Endothelial cell of umbilical vein (primary cell): ENCODE measurements at regions of chr11 and their contacts with region 1.

Region 1: DNA sequence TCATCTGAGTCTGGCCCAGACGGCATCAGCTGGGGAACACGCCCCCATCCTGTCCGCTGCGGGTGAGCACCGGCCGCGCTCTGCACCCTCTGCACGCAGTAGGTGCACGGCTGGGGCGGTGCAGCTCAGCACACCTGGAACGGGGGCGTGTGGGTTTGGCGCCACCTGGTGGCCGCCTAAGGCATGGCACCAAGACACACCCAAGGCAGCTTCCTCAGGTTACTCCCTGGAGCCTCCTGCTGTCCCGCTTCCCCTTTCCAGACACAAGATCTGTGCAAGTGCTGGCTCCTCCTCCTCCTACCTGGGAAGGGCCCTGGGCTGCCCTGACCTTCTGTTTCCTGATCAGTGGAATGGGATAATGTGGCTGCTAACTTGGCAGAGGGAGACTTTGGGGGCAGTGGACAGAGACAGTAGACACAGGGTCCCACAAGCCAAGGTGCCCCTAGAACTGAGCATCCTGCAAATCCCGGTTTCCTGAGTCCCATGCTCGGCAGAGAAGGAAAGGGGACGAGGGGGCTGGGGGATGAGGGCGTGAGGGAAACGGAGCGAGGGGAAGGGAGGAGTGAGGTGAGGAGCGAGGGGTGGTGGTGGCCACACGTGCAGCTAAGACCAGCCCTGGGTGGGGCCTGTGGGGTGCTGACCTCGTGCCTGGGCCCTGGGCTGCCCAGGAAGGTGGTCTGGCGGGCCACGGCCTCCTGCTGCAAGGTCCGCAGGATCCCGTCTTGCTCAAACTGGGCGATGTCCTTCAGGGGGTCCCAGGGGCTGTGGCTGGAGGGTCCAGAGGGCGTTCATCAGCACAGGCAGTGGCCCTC is 34.8 kb upstream of the CARS1 start:
- DNase-seq: peak; percentile 59
- H3K4me3 ChIP-seq: no peak overlapping the region
- H3K27ac ChIP-seq: no peak overlapping the region
- H3K4me1 ChIP-seq: peaks cover 21% of the 10 kb centered on the region
- H3K27me3 ChIP-seq: no peaks in the 10 kb centered on the region
- CTCF ChIP-seq: peak; percentile 98 to 99
- POLR2A ChIP-seq: no peak

Region 2: DNA sequence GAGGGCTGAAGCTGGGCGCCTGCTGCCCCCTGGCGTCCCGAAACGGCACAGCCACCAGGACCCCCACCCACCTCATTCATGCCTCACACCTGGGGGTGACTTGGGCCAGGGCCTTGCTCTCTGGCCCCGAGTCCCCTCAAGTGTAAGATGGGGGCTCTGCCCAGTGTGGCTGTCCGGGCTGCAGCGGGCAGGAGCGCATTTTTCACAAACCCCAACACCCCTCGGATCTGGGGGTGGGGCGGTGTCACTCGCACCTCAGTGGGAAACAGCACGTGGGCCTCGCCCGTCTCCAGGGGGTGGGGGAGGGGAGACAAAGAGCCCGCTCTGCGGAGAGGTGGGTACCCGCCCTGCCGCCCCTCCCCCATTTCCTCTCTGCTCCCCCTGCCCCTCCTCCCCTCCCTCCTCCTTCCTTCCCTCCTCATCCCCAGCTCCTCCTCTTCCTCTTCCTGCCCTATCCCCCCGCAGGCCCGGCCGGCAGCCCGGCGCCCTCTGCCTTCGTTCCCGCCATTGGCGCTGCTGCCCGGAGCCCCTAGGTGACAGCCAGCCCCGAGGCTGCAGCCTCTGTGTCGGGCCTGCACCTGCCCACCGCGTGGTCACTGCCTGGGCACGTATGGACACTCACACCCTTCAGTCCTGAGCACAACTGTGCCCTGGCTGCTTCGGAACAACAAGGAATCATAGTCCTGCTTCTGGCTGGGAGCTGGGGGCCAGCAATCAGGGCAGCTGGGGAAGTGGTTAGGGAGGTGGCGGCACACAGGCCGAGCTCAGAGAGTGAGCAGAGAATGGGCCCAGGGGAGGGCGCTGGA is 199.6 kb before region 1 on chr11:
- CTCF ChIA-PET with region 1: interaction called, 13 read pairs
- POLR2A ChIA-PET with region 1: no interaction called
- dilution Hi-C with region 1: no loop called
- intact Hi-C with region 1: no loop called
- DNase-seq: peak; percentile 64
- H3K4me3 ChIP-seq: peak overlapping the region in 2 of 3 experiments; percentile 29 to 36
- H3K27ac ChIP-seq: peak overlapping the region; percentile 43
- H3K4me1 ChIP-seq: peaks cover 14% of the 10 kb centered on the region
- H3K27me3 ChIP-seq: no peaks in the 10 kb centered on the region
- CTCF ChIP-seq: peak; percentile 95 to 98
- POLR2A ChIP-seq: peak; percentile 79

Region 3: GRCh38 chr11:2992234-2992996 is 99.6 kb before region 1 on chr11 and contains the start of gene NAP1L4:
- CTCF ChIA-PET with region 1: interaction called, 5 read pairs
- POLR2A ChIA-PET with region 1: no interaction called
- dilution Hi-C with region 1: no loop called
- intact Hi-C with region 1: loop called (anchors 1 kb)
- DNase-seq: peak; percentile 97
- H3K4me3 ChIP-seq: peak within 1 kb of the TSS; percentile 64 to 97 (median 95)
- H3K27ac ChIP-seq: peak within 1 kb of the TSS; percentile 64
- H3K4me1 ChIP-seq: peaks cover 33% of the 10 kb centered on the region
- H3K27me3 ChIP-seq: no peaks in the 10 kb centered on the region
- CTCF ChIP-seq: no peak
- POLR2A ChIP-seq: peak; percentile 88
- total RNA-seq, gene NAP1L4: 173 and 177 TPM in 2 replicates

Region 4: DNA sequence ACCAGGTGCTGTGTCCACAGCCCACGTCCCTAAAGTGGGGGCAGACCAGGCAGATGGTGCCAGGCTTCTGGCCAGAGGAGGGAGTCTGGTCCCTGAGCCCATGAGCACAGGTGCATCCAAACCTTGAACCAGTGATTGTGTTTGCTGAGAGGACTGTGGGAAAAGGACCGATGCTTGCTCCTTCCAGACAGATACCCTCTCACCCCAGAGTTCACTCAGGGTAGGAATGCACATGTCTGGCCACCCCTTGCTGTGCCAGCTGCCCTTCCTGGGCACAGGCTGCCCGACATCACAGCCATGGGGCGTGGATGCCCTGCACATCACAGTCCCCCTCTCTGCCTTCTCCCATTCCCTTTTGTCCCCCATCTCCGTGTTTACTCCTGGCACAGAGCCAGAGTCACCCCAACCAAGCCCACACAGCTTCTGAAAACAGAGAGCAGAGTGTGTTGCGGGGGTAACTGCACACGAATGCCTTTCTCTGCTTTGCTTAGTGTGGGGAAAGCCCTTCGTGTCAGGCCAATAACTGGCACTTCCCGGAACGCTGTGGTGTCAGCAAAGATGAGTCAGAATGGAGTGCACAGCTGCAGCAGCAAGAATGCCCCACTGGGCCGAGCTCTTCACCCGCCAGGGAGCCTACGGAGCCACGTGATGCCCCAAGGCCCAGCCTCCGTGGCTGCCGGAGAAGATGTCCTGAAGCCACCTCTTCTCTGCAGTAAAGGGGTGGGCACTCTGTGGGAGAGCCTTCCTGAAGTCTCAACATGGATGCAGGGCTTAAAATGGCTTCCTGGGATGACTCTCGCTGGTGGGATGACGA is 42.4 kb before region 1 on chr11:
- CTCF ChIA-PET with region 1: interaction called, 85 read pairs
- POLR2A ChIA-PET with region 1: interaction called, 4 read pairs
- dilution Hi-C with region 1: no loop called
- intact Hi-C with region 1: loop called (anchors 1 kb)
- DNase-seq: peak; percentile 78
- H3K4me3 ChIP-seq: no peak overlapping the region
- H3K27ac ChIP-seq: peak overlapping the region; percentile 57
- H3K4me1 ChIP-seq: peaks cover 12% of the 10 kb centered on the region
- H3K27me3 ChIP-seq: no peaks in the 10 kb centered on the region
- CTCF ChIP-seq: peak; percentile 27 to 29
- POLR2A ChIP-seq: no peak

Region 5: GRCh38 chr11:3080104-3080503 is 11.9 kb before region 1 on chr11:
- CTCF ChIA-PET with region 1: interaction called, 16 read pairs
- POLR2A ChIA-PET with region 1: no interaction called
- dilution Hi-C with region 1: no loop called
- intact Hi-C with region 1: no loop called
- DNase-seq: no peak
- H3K4me3 ChIP-seq: no peak overlapping the region
- H3K27ac ChIP-seq: no peak overlapping the region
- H3K4me1 ChIP-seq: no peaks in the 10 kb centered on the region
- H3K27me3 ChIP-seq: peaks cover 4% of the 10 kb centered on the region in 2 experiments
- CTCF ChIP-seq: no peak
- POLR2A ChIP-seq: no peak

Region 6: GRCh38 chr11:3123761-3124733 is 32.0 kb after region 1 on chr11:
- CTCF ChIA-PET with region 1: interaction called, 8 read pairs
- POLR2A ChIA-PET with region 1: no interaction called
- dilution Hi-C with region 1: no loop called
- intact Hi-C with region 1: loop called (anchors 1 kb)
- DNase-seq: peak; percentile 83
- H3K4me3 ChIP-seq: no peak overlapping the region
- H3K27ac ChIP-seq: peak overlapping the region; percentile 67
- H3K4me1 ChIP-seq: peaks cover 25% of the 10 kb centered on the region
- H3K27me3 ChIP-seq: no peaks in the 10 kb centered on the region
- CTCF ChIP-seq: no peak
- POLR2A ChIP-seq: no peak

Region 7: DNA sequence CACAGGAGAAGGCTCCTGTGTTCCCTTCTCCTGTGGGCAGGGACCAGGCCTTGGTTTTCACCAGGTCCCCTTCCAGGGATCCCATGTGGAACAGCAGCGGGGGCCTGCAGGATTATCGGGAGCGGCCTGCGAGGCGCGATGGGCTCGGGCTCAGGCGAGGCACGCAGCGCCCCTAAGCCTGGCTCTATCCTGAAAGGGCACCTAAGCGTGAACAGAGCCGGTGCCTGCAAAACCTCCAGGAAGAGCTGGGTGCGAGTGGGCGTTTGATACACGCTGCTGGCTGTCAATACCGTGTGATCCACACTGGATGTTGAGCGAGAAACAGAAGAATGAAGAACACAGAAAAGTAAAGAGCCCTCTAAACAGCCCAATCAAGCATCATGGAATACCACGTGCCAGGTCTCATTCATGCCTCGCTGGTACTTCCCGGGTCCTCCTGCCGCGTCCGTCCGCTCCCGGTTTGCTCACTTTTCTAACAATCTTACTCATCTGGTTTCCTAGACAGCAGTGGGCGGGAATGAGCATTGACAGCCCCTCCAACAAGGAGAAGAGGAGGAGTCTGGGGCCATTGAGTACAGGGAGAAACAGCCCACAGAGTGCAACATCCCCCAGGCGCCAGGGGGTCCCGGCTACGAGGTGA is 60.6 kb after region 1 on chr11:
- CTCF ChIA-PET with region 1: no interaction called
- POLR2A ChIA-PET with region 1: no interaction called
- dilution Hi-C with region 1: no loop called
- intact Hi-C with region 1: no loop called
- DNase-seq: no peak
- H3K4me3 ChIP-seq: no peak overlapping the region
- H3K27ac ChIP-seq: no peak overlapping the region
- H3K4me1 ChIP-seq: no peaks in the 10 kb centered on the region
- H3K27me3 ChIP-seq: no peaks in the 10 kb centered on the region
- CTCF ChIP-seq: no peak
- POLR2A ChIP-seq: no peak

Region 8: DNA sequence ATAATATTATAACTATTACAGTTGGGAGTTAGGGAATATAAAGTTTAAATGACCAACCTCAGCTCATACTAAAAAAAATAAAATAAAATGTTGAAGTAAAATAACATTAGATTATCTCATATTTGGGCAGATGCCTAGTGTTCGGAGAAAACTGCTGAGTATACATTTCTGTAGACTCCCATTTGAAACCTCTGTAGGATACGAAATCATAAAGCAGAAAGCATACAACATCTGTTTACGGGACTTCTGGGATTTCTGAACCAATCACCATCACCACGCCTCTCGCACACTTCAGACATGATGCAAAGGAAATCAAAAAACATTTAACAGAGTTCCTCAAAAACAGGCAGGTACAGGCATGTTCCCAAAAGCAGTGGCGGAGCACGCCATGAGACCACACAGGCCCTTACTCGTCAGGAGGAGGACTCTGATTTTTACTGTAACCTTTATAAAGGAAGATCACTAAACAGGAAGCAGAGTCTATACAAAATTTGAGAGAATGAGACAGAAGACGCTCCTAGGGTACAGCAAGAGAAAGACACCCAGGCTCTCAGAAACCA is 278.4 kb after region 1 on chr11:
- CTCF ChIA-PET with region 1: no interaction called
- POLR2A ChIA-PET with region 1: no interaction called
- dilution Hi-C with region 1: no loop called
- intact Hi-C with region 1: no loop called
- DNase-seq: no peak
- H3K4me3 ChIP-seq: no peak overlapping the region
- H3K27ac ChIP-seq: no peak overlapping the region
- H3K4me1 ChIP-seq: no peaks in the 10 kb centered on the region
- H3K27me3 ChIP-seq: no peaks in the 10 kb centered on the region
- CTCF ChIP-seq: no peak
- POLR2A ChIP-seq: no peak

Region 9: GRCh38 chr11:3412837-3413236 is 320.8 kb after region 1 on chr11:
- CTCF ChIA-PET with region 1: interaction called, 12 read pairs
- POLR2A ChIA-PET with region 1: no interaction called
- dilution Hi-C with region 1: no loop called
- intact Hi-C with region 1: loop called (anchors 5 kb)
- DNase-seq: no peak
- H3K4me3 ChIP-seq: no peak overlapping the region
- H3K27ac ChIP-seq: no peak overlapping the region
- H3K4me1 ChIP-seq: no peaks in the 10 kb centered on the region
- H3K27me3 ChIP-seq: no peaks in the 10 kb centered on the region
- CTCF ChIP-seq: no peak
- POLR2A ChIP-seq: no peak